ENCODE measurements at regions of chr12 and their contacts with region 1.

Region 1: DNA sequence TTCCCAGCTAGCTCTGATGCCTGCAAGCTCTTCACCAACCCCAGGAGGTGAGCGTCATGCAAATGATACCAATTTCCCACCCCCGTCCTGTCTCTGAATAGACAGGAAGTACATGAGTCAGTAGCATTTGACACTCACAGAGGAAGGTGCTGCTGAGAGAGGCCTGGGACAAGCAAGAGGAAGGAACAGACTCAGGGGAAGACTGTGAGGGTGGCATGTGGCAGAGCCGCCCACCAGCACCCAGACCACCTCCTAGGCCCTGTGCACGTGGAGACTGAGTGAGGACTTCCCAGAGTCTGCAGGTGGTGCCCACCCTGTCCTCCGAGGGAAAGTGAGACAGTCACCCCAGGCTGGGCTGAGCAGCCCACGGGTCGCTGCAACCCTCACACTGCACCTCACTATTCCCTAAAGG is 199.5 kb upstream of the SFSWAP start:
- DNase-seq: peak; percentile 73
- ATAC-seq: peak; percentile 82
- H3K4me3 ChIP-seq: no peak overlapping the region
- H3K27ac ChIP-seq: no peak overlapping the region
- H3K4me1 ChIP-seq: peaks cover 20% of the 10 kb centered on the region
- H3K27me3 ChIP-seq: no peaks in the 10 kb centered on the region
- CTCF ChIP-seq: no peak
- EP300 ChIP-seq: no peak
- POLR2A ChIP-seq: peak; percentile 88
- RAD21 ChIP-seq: no peak

Region 2: GRCh38 chr12:131418121-131418520 is 93.3 kb before region 1 on chr12:
- CTCF ChIA-PET with region 1: no interaction called
- POLR2A ChIA-PET with region 1: no interaction called
- RAD21 ChIA-PET with region 1: no interaction called
- SMC1A ChIA-PET with region 1: no interaction called
- in situ Hi-C with region 1: no loop called
- intact Hi-C with region 1: no loop called
- DNase-seq: no peak
- ATAC-seq: no peak
- H3K4me3 ChIP-seq: no peak overlapping the region
- H3K27ac ChIP-seq: no peak overlapping the region
- H3K4me1 ChIP-seq: no peaks in the 10 kb centered on the region
- H3K27me3 ChIP-seq: 0 out of 4 replicates have a peak, but pooled peaks cover 0 to 3% of the 10 kb centered on the region in 2 experiments
- CTCF ChIP-seq: no peak
- EP300 ChIP-seq: no peak
- POLR2A ChIP-seq: no peak
- RAD21 ChIP-seq: no peak

Region 3: GRCh38 chr12:131536337-131536736 is 24.9 kb after region 1 on chr12:
- CTCF ChIA-PET with region 1: no interaction called
- POLR2A ChIA-PET with region 1: interaction called, 3 read pairs
- RAD21 ChIA-PET with region 1: interaction called, 7 read pairs
- SMC1A ChIA-PET with region 1: interaction called, 10 read pairs
- in situ Hi-C with region 1: no loop called
- intact Hi-C with region 1: no loop called
- DNase-seq: no peak
- ATAC-seq: no peak; the same call in 1 of the 3 replicates
- H3K4me3 ChIP-seq: no peak overlapping the region
- H3K27ac ChIP-seq: no peak overlapping the region
- H3K4me1 ChIP-seq: no peaks in the 10 kb centered on the region
- H3K27me3 ChIP-seq: no peaks in the 10 kb centered on the region
- CTCF ChIP-seq: no peak
- EP300 ChIP-seq: peak in 1 of 2 experiments; percentile 17; a peak in 1 of 4 replicates
- POLR2A ChIP-seq: no peak
- RAD21 ChIP-seq: no peak